Left ventricle myocardium superior (tissue), 1 donor: ENCODE measurements at regions of chr15 and their contacts with region 1.

Region 1: GRCh38 chr15:81473177-81473576 is 99.2 kb upstream of the TMC3 start:
- DNase-seq: no peak
- ATAC-seq: peak; percentile 33

Region 2: DNA sequence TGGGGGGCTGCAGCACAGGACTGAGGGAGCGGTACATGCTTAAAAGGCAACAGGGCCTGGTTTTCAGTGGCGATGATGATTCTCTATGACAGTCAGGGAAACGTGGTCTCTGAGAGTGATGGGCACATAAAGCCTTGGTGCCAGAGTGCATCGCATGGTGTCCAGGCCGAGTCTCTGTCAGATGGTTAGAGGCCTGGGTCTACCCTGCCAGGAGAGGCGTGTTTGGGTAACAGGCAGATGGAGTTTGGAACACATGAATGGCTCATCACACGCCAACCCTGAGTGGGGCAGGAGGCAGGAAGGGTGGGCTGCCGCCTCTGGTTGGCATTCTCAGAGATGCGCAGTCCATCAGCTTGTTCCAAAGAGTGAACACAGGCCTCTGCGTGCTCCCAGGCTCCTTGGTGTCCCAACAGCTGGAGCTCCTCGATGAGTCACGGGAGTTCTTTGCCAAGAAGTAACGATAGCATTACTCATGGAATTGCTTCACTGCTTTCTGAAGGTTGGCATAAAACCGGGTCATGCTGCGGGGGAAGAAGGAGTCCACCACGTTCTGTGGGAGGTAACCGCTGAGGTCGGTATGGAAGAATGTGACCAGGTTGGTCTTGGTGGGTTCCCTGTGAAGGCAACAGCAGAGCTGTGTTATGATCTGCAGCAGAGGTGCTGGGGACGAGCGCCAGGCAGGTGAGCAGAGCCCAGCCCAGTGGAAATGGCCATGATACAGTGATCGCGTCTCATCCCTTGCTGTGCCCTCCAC is 160.2 kb before region 1 on chr15:
- intact Hi-C with region 1: no loop called
- DNase-seq: peak; percentile 74
- ATAC-seq: peak; percentile 86

Region 3: DNA sequence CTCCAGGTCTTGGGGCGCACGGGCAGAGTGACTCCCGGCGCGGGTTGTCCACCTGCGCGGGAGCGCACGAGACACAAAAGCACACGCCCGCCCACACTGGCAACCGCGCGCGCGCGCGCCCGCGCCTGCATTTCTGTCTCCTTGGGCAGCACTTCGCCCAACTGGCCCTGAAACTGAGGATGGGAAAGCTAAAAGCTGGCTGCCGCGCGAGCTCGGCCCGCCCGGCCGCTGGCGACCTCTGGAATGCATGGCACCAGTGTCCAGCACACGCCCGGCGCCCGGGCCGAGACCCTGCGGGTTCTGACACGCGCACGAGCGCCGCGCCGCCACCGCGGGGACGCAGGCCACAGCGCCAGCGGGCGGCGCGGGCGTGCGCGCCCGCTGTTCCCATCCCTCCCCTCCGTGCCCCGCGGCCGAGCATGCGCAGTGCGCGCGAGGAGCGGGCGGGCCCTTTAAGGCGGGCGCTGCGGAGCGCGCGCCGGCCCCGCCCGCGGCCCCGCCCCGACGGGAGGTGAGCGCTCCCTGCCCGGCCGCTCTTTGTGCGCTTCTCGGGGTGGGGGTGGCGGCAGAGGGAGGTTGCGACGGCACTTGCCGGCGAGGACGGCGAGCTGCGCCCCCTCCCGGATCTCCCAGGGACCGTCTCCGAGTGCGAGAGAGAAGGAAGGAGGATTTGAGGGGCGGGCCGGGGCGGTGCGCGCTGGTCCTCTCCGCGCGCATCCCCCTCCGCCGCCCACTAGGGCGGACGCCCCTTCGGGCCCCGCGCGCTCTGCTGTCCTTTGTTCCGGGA is 573.7 kb after region 1 on chr15:
- intact Hi-C with region 1: loop called (anchors 10 kb)
- DNase-seq: peak; percentile 95
- ATAC-seq: peak; percentile 84